Mammary epithelial cell (primary cell): ENCODE measurements at regions of chr11 and their contacts with region 1.

Region 1: GRCh38 chr11:132126973-132127899 is 756.8 kb downstream of the NTM start:
- DNase-seq: peak; percentile 67
- H3K4me3 ChIP-seq: peak overlapping the region in 2 of 3 experiments; percentile 34 to 36
- H3K27ac ChIP-seq: peak overlapping the region; percentile 48
- H3K4me1 ChIP-seq: peaks cover 29% of the 10 kb centered on the region
- H3K27me3 ChIP-seq: no peaks in the 10 kb centered on the region
- CTCF ChIP-seq: peak; percentile 62 to 79

Region 2: DNA sequence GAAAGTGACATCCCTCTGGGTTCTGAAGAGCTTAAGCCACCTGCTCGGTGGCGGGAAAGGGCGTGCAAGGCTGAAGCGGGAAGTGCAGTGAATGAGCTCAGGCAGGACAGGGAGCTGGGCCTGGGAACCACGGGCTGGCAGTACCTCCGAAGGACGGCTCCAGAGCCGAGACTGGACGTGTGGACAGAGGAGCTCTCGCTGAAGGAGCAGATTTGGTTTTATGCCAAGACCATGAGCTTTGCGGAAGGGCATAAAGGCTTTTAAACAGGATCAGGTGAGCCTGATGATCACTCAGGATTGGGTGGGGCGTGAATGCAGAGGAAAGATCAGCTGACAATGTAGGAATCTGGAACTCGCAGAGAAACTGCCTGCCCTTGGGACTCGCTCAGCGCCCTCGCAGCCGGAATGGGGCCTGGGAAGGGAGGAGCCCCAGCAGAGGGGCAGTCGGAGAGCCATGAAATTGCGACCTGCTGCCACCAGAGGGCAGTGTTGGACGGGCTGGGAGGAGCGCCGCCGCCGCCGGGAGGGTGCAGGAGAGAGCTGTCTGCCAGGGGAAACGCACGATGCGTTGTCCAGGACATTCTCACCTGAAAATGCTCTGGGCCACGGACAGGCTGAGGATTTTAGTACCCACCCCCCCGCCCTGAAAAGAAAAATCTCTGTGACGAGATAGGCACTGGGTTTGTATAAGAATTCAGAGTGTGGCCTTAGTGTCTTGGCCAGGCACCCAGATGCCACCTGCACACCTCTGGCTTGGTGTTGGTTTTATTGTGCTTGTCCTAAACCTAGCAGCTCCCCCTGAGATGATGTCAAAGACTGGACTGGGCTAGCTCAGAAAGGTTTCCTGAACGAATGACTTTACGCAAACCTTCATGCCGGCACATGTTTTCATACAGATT is 432.5 kb before region 1 on chr11:
- CTCF ChIA-PET with region 1: no interaction called
- dilution Hi-C with region 1: no loop called
- in situ Hi-C with region 1: no loop called
- intact Hi-C with region 1: loop called (anchors 2 kb)
- DNase-seq: peak; percentile 65
- H3K4me3 ChIP-seq: no peak overlapping the region
- H3K27ac ChIP-seq: no peak overlapping the region
- H3K4me1 ChIP-seq: no peaks in the 10 kb centered on the region
- H3K27me3 ChIP-seq: no peaks in the 10 kb centered on the region
- CTCF ChIP-seq: peak; percentile 63 to 78

Region 3: GRCh38 chr11:131910523-131911387 is 216.5 kb before region 1 on chr11:
- CTCF ChIA-PET with region 1: interaction called, 14 read pairs
- dilution Hi-C with region 1: no loop called
- in situ Hi-C with region 1: loop called (anchors 5 to 10 kb)
- intact Hi-C with region 1: loop called (anchors 1 kb)
- DNase-seq: peak; percentile 60
- H3K4me3 ChIP-seq: peak overlapping the region; percentile 70 to 83 (median 81)
- H3K27ac ChIP-seq: peak overlapping the region; percentile 69
- H3K4me1 ChIP-seq: peaks cover 36% of the 10 kb centered on the region
- H3K27me3 ChIP-seq: no peaks in the 10 kb centered on the region
- CTCF ChIP-seq: no peak

Region 4: GRCh38 chr11:132064987-132065620 is 62.1 kb before region 1 on chr11:
- CTCF ChIA-PET with region 1: no interaction called
- dilution Hi-C with region 1: no loop called
- in situ Hi-C with region 1: no loop called
- intact Hi-C with region 1: loop called (anchors 2 kb)
- DNase-seq: peak; percentile 98
- H3K4me3 ChIP-seq: no peak overlapping the region
- H3K27ac ChIP-seq: peak overlapping the region; percentile 95
- H3K4me1 ChIP-seq: peaks cover 69% of the 10 kb centered on the region
- H3K27me3 ChIP-seq: no peaks in the 10 kb centered on the region
- CTCF ChIP-seq: no peak

Region 5: GRCh38 chr11:132114185-132114584 is 13.1 kb before region 1 on chr11:
- CTCF ChIA-PET with region 1: interaction called, 12 read pairs
- dilution Hi-C with region 1: no loop called
- in situ Hi-C with region 1: no loop called
- intact Hi-C with region 1: no loop called
- DNase-seq: no peak
- H3K4me3 ChIP-seq: no peak overlapping the region
- H3K27ac ChIP-seq: no peak overlapping the region
- H3K4me1 ChIP-seq: peaks cover 14% of the 10 kb centered on the region
- H3K27me3 ChIP-seq: no peaks in the 10 kb centered on the region
- CTCF ChIP-seq: peak; percentile 34 to 68

Region 6: DNA sequence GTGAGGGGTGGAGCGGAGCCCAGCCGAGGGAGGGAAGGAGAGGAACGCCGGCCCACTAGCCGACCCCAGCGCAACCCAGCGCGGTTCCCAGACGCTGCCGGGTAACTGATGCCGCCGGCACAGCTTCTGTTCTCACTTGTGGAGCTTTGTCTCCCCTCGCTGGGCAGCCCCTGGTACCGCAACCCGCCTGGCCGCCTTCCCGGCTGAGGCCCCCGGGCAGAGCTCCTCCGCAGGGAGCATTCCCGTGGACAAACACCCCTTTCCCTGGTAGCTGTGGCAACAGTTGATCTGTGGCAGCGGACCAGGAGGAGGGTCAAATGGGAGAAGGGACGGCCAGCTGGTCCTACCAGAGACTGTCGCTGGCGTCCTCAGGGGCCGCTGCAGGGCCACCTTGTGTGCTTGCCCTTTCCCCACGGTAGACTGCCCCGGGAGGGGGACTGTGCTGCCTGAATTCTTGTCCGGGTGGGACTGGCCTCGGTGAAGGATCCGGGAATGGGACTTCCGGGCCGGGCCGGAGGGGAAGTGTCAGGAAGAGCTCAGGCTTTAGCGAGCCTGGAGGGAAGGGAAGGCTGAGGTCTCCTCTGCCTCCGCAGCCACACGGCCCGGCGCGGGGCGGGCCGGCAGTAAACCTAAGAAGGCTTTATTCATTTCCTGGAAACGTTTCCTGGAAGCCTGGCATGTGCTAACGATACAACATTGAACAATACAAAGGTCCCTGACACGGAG is 937.1 kb after region 1 on chr11:
- CTCF ChIA-PET with region 1: no interaction called
- dilution Hi-C with region 1: no loop called
- in situ Hi-C with region 1: no loop called
- intact Hi-C with region 1: loop called (anchors 2 kb)
- DNase-seq: peak; percentile 30
- H3K4me3 ChIP-seq: peak overlapping the region; percentile 52 to 58 (median 57)
- H3K27ac ChIP-seq: no peak overlapping the region
- H3K4me1 ChIP-seq: peaks cover 11% of the 10 kb centered on the region
- H3K27me3 ChIP-seq: no peaks in the 10 kb centered on the region
- CTCF ChIP-seq: peak; percentile 58 to 82